ENCODE measurements at regions of chr2 and their contacts with region 1.

Region 1: GRCh38 chr2:12716282-12717190 is at the start of gene TRIB2:
- DNase-seq: peak; percentile 82
- H3K4me3 Mint-ChIP-seq: peak within 1 kb of the TSS; percentile 91
- H3K27ac Mint-ChIP-seq: peak within 1 kb of the TSS; percentile 91
- H3K4me1 Mint-ChIP-seq: peaks cover 58% of the 10 kb centered on the region
- H3K27me3 Mint-ChIP-seq: peaks cover 10% of the 10 kb centered on the region
- total RNA-seq, gene TRIB2: 6.3 TPM in 2 replicates

Region 2: DNA sequence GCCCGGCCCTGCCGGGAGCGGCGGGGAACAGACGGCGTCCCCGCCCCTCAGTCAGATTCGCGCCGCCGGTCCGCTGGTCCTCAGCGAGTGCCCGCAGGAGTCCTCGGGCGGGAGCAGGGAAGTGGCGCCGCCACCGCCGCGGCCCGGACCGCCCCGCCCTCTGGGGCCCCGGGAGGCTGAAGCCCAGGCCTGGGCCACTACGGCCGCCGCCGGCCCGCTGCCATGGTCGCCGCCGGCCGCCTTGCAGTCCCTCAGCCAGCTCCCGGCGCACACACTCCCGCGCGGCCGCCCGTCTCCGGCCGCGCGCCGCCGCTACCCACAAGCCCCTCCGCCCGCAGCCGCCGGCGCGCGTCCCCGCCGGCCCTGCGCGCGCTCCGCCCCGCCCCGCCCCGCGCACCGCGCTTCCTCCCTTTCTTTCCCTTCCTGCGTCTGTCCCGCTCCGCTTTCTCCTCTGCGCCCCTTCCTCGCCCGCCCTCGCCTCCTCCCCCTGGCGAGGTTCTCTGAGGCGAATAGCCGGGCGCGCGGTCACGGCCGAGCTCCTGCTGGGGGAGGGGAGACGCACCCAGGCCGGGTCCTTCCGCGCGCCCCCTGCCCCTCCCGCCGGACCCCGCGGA is 1372.1 kb before region 1 on chr2 and contains the start of gene ROCK2:
- intact Hi-C with region 1: loop called (anchors 5 kb)
- DNase-seq: peak; percentile 62
- H3K4me3 Mint-ChIP-seq: peak within 1 kb of the TSS; percentile 99
- H3K27ac Mint-ChIP-seq: peak within 1 kb of the TSS; percentile 95
- H3K4me1 Mint-ChIP-seq: peaks cover 35% of the 10 kb centered on the region
- H3K27me3 Mint-ChIP-seq: peaks cover 14% of the 10 kb centered on the region
- total RNA-seq, gene ROCK2: 20.5 and 21.7 TPM in 2 replicates

Region 3: GRCh38 chr2:11829947-11830707 is 886.4 kb before region 1 on chr2:
- intact Hi-C with region 1: loop called (anchors 1 kb)
- DNase-seq: peak; percentile 59
- H3K4me3 Mint-ChIP-seq: peak overlapping the region; percentile 76
- H3K27ac Mint-ChIP-seq: peak overlapping the region; percentile 75
- H3K4me1 Mint-ChIP-seq: peaks cover 44% of the 10 kb centered on the region
- H3K27me3 Mint-ChIP-seq: peaks cover 37% of the 10 kb centered on the region

Region 4: GRCh38 chr2:12169721-12170120 is 546.8 kb before region 1 on chr2:
- intact Hi-C with region 1: loop called (anchors 10 kb)
- DNase-seq: peak; percentile 12
- H3K4me3 Mint-ChIP-seq: no peak overlapping the region
- H3K27ac Mint-ChIP-seq: peak overlapping the region; percentile 55
- H3K4me1 Mint-ChIP-seq: peaks cover 27% of the 10 kb centered on the region
- H3K27me3 Mint-ChIP-seq: peaks cover 4% of the 10 kb centered on the region

Region 5: GRCh38 chr2:12430407-12431133 is 286.0 kb before region 1 on chr2:
- intact Hi-C with region 1: loop called (anchors 1 kb)
- DNase-seq: peak; percentile 8
- H3K4me3 Mint-ChIP-seq: peak overlapping the region; percentile 58
- H3K27ac Mint-ChIP-seq: peak overlapping the region; percentile 74
- H3K4me1 Mint-ChIP-seq: peaks cover 55% of the 10 kb centered on the region
- H3K27me3 Mint-ChIP-seq: no peaks in the 10 kb centered on the region

Region 6: DNA sequence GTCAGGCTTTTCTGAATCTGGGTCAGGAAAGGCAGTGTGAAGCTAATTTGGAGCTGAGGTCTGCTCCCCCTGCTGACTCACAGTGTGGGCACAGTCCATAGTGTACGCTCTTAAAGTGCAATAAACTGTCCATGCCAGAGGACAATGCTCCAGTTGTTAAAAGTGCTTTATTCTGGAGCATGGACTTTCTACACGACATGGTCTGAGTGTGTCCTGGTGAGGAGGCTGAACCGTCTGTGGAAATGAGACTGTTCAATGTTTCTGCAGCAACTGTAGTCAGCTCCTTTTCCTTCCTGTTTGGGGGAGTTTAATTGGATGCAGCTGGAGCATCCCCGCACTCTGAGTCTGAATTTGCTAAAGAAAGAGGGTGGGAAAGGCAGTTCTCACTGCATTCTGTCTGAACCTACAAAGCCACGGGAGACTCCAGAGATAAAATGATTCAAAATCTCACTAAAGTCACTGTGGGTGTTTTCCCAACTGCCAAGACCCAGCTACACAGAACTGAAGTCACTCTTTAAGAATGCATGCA is 110.0 kb before region 1 on chr2:
- intact Hi-C with region 1: loop called (anchors 5 kb)
- DNase-seq: no peak
- H3K4me3 Mint-ChIP-seq: no peak overlapping the region
- H3K27ac Mint-ChIP-seq: no peak overlapping the region
- H3K4me1 Mint-ChIP-seq: peaks cover 15% of the 10 kb centered on the region
- H3K27me3 Mint-ChIP-seq: peaks cover 15% of the 10 kb centered on the region

Region 7: DNA sequence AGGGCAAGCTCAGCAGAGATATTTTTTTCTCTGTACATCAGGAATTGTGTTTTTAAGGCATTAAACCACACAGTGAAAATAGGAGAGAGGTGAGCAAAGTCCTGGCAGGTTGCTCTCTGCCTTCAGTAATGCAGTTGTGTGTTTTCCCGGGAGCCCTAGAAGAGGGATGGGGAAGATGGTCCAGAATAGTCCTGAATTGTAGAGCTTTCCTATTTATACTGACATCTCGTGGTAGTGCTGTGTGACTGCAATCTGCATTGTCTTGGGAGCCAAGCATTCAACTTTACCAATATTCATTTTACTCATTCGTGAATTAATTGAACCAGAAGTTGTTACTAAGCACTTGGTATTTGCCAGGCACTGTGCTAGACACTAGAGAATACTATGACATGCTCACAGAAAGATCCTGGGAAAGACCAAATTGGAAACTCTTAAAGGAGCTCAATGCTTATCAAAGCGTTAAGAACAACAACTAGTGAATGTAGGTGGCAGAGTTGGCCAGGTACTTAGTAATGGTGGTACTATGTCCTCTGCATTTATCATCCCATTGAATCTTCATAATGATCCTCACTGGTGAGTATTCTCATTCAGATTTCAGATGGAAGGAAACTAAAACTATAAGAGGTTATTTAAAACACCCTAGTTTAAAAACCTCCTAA is 214.8 kb after region 1 on chr2:
- intact Hi-C with region 1: loop called (anchors 1 kb)
- DNase-seq: no peak
- H3K4me3 Mint-ChIP-seq: no peak overlapping the region
- H3K27ac Mint-ChIP-seq: no peak overlapping the region
- H3K4me1 Mint-ChIP-seq: peaks cover 10% of the 10 kb centered on the region
- H3K27me3 Mint-ChIP-seq: peaks cover 41% of the 10 kb centered on the region

Measured in activated T-helper 1 cell treated with anti-CD3 and anti-CD28 coated beads, Interleukin-12 subunit alpha, Interleukin-12 subunit beta, Interleukin-2, Interleukin-4 antibody, amounts not matched to agents 30 ng/mL and 10 ng/mL and 1 ng/mL, durations not matched to agents 14 hours and 24 hours and 36 hours (primary cell).